ENCODE measurements at regions of chr4 and their contacts with region 1.

Region 1: GRCh38 chr4:106315968-106316772 is at the starts of genes AIMP1 and TBCK:
- DNase-seq: peak; percentile 88
- ATAC-seq: peak; percentile 92
- H3K4me3 ChIP-seq: peak within 1 kb of the TSS; percentile 89 to 97 (median 93)
- H3K27ac ChIP-seq: peak within 1 kb of the TSS; percentile 99
- H3K4me1 ChIP-seq: peaks cover 59% of the 10 kb centered on the region
- H3K27me3 ChIP-seq: no peaks in the 10 kb centered on the region; a peak in 2 of 5 replicates
- CTCF ChIP-seq: no peak
- EP300 ChIP-seq: no peak; a peak in 1 of 4 replicates
- POLR2A ChIP-seq: peak; percentile 72 to 84
- RAD21 ChIP-seq: no peak; the same call in 1 of the 2 replicates
- total RNA-seq, gene AIMP1: 82.9 and 116 TPM in 2 replicates
- total RNA-seq, gene TBCK: 44.3 and 51.0 TPM in 2 replicates

Region 2: GRCh38 chr4:105708530-105709391 is 607.4 kb before region 1 on chr4 and contains the starts of genes GSTCD and INTS12:
- CTCF ChIA-PET with region 1: no interaction called
- POLR2A ChIA-PET with region 1: no interaction called
- in situ Hi-C with region 1: no loop called
- intact Hi-C with region 1: loop called (anchors 10 kb)
- DNase-seq: peak; percentile 82
- ATAC-seq: peak; percentile 93
- H3K4me3 ChIP-seq: peak within 1 kb of the TSS; percentile 80 to 98 (median 82)
- H3K27ac ChIP-seq: peak within 1 kb of the TSS; percentile 90
- H3K4me1 ChIP-seq: peaks cover 40% of the 10 kb centered on the region
- H3K27me3 ChIP-seq: no peaks in the 10 kb centered on the region; a peak in 1 of 5 replicates
- CTCF ChIP-seq: peak; percentile 42; the same call in 1 of the 2 replicates
- EP300 ChIP-seq: peak; percentile 79 to 91; a peak in 3 of 4 replicates
- POLR2A ChIP-seq: peak; percentile 90 to 91
- RAD21 ChIP-seq: peak; percentile 50; the same call in 1 of the 2 replicates
- total RNA-seq, gene GSTCD: 30.8 and 38.7 TPM in 2 replicates
- total RNA-seq, gene INTS12: 21.1 and 22.9 TPM in 2 replicates

Region 3: GRCh38 chr4:106238820-106239420 is 77.2 kb before region 1 on chr4:
- CTCF ChIA-PET with region 1: no interaction called
- POLR2A ChIA-PET with region 1: interaction called, 3 read pairs
- in situ Hi-C with region 1: no loop called
- intact Hi-C with region 1: loop called (anchors 2 kb)
- DNase-seq: peak; percentile 61
- ATAC-seq: peak; percentile 99
- H3K4me3 ChIP-seq: no peak overlapping the region
- H3K27ac ChIP-seq: peak overlapping the region; percentile 47
- H3K4me1 ChIP-seq: peaks cover 15% of the 10 kb centered on the region
- H3K27me3 ChIP-seq: no peaks in the 10 kb centered on the region
- CTCF ChIP-seq: peak; percentile 68
- EP300 ChIP-seq: no peak
- POLR2A ChIP-seq: no peak
- RAD21 ChIP-seq: peak; percentile 45; the same call in 1 of the 2 replicates

Region 4: GRCh38 chr4:106258145-106259045 is 57.8 kb before region 1 on chr4:
- CTCF ChIA-PET with region 1: no interaction called
- POLR2A ChIA-PET with region 1: interaction called, 45 read pairs
- in situ Hi-C with region 1: no loop called
- intact Hi-C with region 1: no loop called
- DNase-seq: peak; percentile 95
- ATAC-seq: peak; percentile 91
- H3K4me3 ChIP-seq: peak overlapping the region in 2 of 3 experiments; percentile 9 to 21; a peak in 2 of 6 replicates
- H3K27ac ChIP-seq: peak overlapping the region; percentile 94
- H3K4me1 ChIP-seq: peaks cover 85% of the 10 kb centered on the region
- H3K27me3 ChIP-seq: no peaks in the 10 kb centered on the region
- CTCF ChIP-seq: no peak
- EP300 ChIP-seq: peak; percentile 75 to 100; a peak in 2 of 4 replicates
- POLR2A ChIP-seq: no peak
- RAD21 ChIP-seq: no peak

Region 5: DNA sequence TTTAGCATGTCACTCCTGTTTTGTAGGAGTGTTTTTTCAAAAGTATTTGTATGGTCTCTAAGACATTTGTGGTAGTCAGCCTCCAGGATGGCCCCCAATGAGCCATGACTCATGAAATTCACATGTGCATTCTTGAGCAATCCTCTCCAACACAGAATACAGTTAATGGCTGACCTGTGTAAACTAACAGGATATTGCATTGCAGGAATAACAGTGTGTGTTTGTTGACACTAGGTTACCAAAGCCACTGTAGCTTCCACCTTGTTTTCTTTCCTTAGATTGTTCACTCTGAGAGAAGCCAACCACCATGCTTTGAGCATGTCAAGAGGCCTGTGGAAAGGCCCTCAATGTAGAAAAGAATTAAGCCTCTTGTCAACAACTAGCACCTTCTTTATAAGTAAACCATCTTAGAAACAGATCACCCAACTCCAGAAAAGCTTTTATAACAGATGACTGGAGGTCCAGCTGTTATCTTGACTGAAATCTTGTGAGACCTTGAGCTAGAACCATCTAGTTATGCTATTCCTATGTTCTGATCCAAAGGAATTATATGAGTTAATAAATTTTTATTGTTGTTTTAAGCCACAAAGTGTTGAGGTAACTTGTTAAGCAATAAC is 28.7 kb before region 1 on chr4:
- CTCF ChIA-PET with region 1: no interaction called
- POLR2A ChIA-PET with region 1: interaction called, 43 read pairs
- in situ Hi-C with region 1: no loop called
- intact Hi-C with region 1: loop called (anchors 1 kb)
- DNase-seq: peak; percentile 97
- ATAC-seq: peak; percentile 100
- H3K4me3 ChIP-seq: no peak overlapping the region
- H3K27ac ChIP-seq: peak overlapping the region; percentile 98
- H3K4me1 ChIP-seq: peaks cover 37% of the 10 kb centered on the region
- H3K27me3 ChIP-seq: no peaks in the 10 kb centered on the region
- CTCF ChIP-seq: no peak
- EP300 ChIP-seq: peak; percentile 88 to 98
- POLR2A ChIP-seq: no peak
- RAD21 ChIP-seq: no peak

Region 6: DNA sequence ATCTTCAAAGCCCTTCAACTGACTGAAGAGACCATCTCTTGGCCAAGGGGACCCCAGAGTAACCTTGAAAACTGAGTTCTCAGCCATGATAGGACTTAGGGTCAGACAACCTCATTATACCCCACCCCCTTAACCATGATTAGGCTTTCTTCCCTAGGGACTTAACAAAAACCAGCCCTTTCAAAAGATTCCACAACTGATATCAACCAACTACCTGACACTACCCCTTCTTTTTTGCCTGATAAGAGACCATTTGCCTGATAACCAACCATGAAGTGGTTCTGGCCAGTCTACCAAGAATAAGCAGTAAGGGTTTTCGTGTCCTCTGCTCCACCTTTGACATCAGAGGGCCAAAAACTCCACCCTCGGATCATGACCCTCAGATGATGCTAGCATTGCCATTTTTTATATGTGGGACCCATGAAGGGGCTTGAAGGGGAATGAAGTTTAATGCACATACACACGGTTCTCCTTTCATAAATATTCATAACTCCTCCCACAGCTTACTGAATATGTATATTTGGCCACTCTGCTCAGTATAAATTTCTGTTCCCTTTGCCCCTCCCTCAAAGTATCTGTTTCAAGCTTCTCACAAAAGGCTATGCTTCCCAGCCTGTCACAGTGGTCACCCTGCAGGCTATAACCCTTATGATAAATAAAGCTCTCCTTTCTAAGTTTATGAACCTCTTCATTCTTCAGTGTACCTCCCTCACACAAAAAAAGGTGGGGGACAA is 12.5 kb before region 1 on chr4:
- CTCF ChIA-PET with region 1: no interaction called
- POLR2A ChIA-PET with region 1: interaction called, 14 read pairs
- in situ Hi-C with region 1: no loop called
- intact Hi-C with region 1: no loop called
- DNase-seq: no peak
- ATAC-seq: no peak
- H3K4me3 ChIP-seq: no peak overlapping the region
- H3K27ac ChIP-seq: peak overlapping the region; percentile 33
- H3K4me1 ChIP-seq: peaks cover 43% of the 10 kb centered on the region
- H3K27me3 ChIP-seq: no peaks in the 10 kb centered on the region; a peak in 1 of 5 replicates
- CTCF ChIP-seq: no peak
- EP300 ChIP-seq: no peak
- POLR2A ChIP-seq: no peak
- RAD21 ChIP-seq: no peak

Region 7: DNA sequence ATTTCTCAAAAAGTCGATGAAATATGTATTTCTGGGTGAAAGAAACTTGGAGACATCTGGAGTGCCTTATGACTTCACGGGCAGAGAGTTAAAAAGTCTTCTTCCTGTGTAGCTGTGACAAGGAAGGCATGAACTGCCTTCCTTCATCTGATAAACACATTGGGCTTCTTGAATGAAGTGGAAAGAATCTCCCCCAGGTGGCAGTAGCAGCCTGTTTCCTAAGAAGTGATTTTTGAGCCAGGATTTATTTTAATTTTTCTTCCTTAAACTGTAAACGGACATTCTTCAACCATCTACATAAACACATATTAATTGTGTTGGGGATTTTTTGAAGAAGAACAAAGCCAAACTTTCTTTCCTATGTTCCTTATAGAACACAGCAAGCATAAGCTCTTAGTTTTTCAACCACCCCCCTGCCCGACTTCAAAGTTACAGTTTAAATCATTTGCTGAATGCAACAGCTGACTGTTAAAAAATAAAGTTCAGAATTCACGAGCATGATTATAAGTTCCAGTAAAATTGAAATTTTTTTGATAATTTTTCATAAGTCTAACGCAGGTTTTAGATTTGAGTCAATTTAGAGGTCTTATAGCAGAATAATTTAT is 53.4 kb after region 1 on chr4:
- CTCF ChIA-PET with region 1: no interaction called
- POLR2A ChIA-PET with region 1: interaction called, 7 read pairs
- in situ Hi-C with region 1: no loop called
- intact Hi-C with region 1: loop called (anchors 5 kb)
- DNase-seq: peak; percentile 42
- ATAC-seq: peak; percentile 67
- H3K4me3 ChIP-seq: no peak overlapping the region
- H3K27ac ChIP-seq: no peak overlapping the region
- H3K4me1 ChIP-seq: peaks cover 17% of the 10 kb centered on the region
- H3K27me3 ChIP-seq: no peaks in the 10 kb centered on the region
- CTCF ChIP-seq: peak; percentile 73
- EP300 ChIP-seq: no peak
- POLR2A ChIP-seq: no peak
- RAD21 ChIP-seq: peak; percentile 67; the same call in 1 of the 2 replicates

Region 8: DNA sequence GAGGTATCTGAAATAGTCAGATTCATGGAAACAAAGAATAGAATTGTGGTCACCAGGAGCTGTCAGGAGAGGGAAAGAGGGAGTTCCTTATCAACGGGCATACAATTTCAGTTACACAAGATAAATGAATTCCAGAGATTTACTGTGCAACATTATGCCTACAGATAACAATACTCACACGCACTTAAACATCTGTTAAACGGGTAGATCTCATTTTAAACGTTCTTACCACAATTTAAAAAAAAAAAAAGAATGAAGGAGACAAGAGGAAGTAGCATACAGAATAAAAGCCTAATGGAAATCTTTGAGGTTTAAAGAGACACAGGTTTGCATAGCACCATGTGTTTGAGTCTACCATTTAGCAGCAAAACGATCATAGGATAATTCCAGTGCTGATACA is 422.0 kb after region 1 on chr4:
- CTCF ChIA-PET with region 1: no interaction called
- POLR2A ChIA-PET with region 1: no interaction called
- in situ Hi-C with region 1: no loop called
- intact Hi-C with region 1: no loop called
- DNase-seq: no peak
- ATAC-seq: no peak
- H3K4me3 ChIP-seq: no peak overlapping the region
- H3K27ac ChIP-seq: no peak overlapping the region
- H3K4me1 ChIP-seq: no peaks in the 10 kb centered on the region
- H3K27me3 ChIP-seq: no peaks in the 10 kb centered on the region
- CTCF ChIP-seq: no peak
- EP300 ChIP-seq: no peak
- POLR2A ChIP-seq: no peak
- RAD21 ChIP-seq: no peak

Measured in HepG2 (cell line).